ENCODE measurements at regions of chr4 and their contacts with region 1.

Region 1: DNA sequence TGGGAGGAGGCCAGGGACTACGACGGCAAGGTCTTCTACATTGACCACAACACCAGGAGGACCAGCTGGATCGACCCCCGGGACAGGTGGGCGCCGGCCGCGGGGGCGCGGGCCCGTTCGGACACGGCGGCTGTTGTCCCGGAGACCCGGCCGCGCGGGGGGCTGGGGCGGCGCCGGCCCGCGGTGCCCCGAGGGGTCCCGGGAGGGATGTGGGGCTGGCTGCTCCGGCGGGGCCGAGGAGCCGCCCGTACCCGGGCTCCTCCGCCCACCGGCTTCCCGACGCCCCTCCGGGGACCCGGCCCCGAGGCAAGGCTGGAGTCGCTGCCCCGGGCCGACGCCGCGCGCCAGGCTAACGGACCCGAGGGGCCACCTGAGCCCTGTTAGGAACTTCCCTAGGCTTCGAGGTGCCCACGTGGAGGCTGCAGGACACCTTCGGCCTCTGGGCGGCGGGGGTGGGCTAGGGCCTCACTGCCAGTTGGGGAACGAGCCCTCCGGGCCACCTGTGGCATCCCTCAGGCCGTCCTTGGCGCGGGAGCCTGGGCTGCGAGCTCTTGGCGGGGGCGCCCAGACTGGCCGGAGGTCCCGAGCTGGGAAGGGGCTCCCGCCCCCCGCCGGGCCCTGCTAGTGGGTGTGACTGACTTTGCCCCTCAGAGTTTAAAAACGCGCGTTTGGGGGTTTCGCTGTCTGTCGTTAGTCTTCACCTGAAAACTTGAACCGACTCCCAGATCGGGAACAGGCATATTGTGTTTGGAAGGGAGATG is 660 bp downstream of the WWC2 start:
- DNase-seq: peak; percentile 54
- ATAC-seq: no peak

Region 2: GRCh38 chr4:182955411-182955810 is 144.3 kb before region 1 on chr4:
- intact Hi-C with region 1: no loop called
- DNase-seq: no peak
- ATAC-seq: no peak

Region 3: GRCh38 chr4:183130328-183131173 is 30.8 kb after region 1 on chr4:
- intact Hi-C with region 1: loop called (anchors 2 kb)
- DNase-seq: peak; percentile 76
- ATAC-seq: peak; percentile 83

Region 4: DNA sequence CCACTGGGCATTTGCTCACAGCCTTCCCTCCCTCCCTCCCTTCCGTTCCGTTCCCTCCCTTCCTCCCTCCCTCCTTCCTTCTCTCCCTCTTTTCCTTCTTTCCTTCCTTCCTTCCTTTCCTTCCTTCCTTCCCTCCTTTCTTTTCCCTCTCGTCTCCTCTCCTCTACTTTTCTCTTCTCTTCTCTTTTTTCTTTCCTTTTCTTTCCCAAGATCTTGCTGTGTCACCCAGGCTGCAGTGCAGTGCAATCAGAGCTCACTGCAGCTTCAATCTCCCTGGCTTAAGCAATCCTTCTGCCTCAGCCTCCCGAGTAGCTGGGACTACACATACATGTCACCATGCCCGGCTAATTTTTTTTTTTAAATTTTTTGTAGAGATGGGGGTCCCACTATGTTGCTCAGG is 378.4 kb after region 1 on chr4:
- intact Hi-C with region 1: no loop called
- DNase-seq: no peak
- ATAC-seq: no peak